PC-9 (cell line): ENCODE measurements at regions of chr12 and their contacts with region 1.

Region 1: GRCh38 chr12:118052324-118053070 is 8.5 kb downstream of the WSB2 start:
- DNase-seq: peak; percentile 88 to 97
- H3K4me3 ChIP-seq: peak overlapping the region; percentile 31; the same call in 1 of the 2 replicates
- H3K27ac ChIP-seq: peak overlapping the region; percentile 84
- H3K4me1 ChIP-seq: peaks cover 40% of the 10 kb centered on the region
- H3K27me3 ChIP-seq: no peaks in the 10 kb centered on the region
- CTCF ChIP-seq: no peak

Region 2: GRCh38 chr12:117968826-117969659 is 83.5 kb before region 1 on chr12 and contains the start of gene KSR2:
- CTCF ChIA-PET with region 1: interaction called, 3 read pairs
- POLR2A ChIA-PET with region 1: no interaction called
- intact Hi-C with region 1: loop called (anchors 2 kb)
- DNase-seq: peak; percentile 74 to 88
- H3K4me3 ChIP-seq: peak within 1 kb of the TSS; percentile 69
- H3K27ac ChIP-seq: peak within 1 kb of the TSS; percentile 67
- H3K4me1 ChIP-seq: peaks cover 9% of the 10 kb centered on the region; the same call in 1 of the 2 replicates
- H3K27me3 ChIP-seq: no peaks in the 10 kb centered on the region
- CTCF ChIP-seq: no peak
- total RNA-seq, gene KSR2: 1.0 and 2.0 TPM in 2 replicates

Region 3: DNA sequence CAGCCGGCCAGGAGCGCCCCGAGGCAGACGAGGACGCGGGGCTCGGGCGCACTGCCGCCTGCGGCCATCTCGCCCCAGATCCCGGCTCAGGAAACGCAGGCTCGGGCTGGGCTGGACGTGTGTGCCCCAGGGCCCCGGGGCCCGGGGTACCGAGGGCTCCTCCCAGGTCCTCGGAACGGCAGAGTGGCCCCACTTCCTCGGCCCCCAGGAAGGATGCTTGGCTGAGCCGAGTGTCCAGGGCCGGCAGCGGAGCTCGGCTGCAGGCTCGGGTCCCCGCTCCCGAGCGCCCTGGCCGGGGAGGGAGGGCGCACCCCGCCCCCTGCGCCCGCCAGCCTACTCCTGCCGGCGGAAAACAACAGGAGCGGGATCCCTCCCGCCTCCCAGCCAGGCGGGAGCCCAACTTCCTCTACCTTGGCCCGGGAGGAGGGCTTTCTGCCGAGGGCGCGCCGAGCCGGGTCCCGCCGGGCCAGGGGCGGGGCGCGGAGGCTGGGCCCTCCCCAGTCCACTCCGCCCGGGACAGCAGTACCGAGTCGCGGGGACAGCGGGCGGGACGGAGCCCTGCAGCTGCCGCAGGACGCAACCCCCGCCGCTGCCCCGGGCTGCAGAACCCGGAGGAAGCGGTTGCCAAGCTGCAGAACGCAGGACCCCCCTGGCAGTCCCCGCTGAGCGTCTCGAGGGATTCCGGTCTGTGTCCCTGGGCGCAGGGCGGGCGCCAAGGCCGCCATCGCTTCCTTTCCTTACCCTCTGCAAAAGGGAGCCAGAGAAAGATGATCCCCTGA is 51.3 kb after region 1 on chr12 and contains the start of gene VSIG10:
- CTCF ChIA-PET with region 1: no interaction called
- POLR2A ChIA-PET with region 1: no interaction called
- intact Hi-C with region 1: loop called (anchors 2 kb)
- DNase-seq: peak; percentile 49 to 82
- H3K4me3 ChIP-seq: peak within 1 kb of the TSS; percentile 81
- H3K27ac ChIP-seq: 0 out of 2 replicates have a peak within 1 kb of the TSS, but pooled peaks have one; percentile 2
- H3K4me1 ChIP-seq: peaks cover 18% of the 10 kb centered on the region
- H3K27me3 ChIP-seq: no peaks in the 10 kb centered on the region
- CTCF ChIP-seq: no peak
- total RNA-seq, gene VSIG10: 45.7 and 49.1 TPM in 2 replicates

Region 4: GRCh38 chr12:118429688-118430383 is 377.3 kb after region 1 on chr12:
- CTCF ChIA-PET with region 1: no interaction called
- POLR2A ChIA-PET with region 1: no interaction called
- intact Hi-C with region 1: no loop called
- DNase-seq: no peak
- H3K4me3 ChIP-seq: no peak overlapping the region
- H3K27ac ChIP-seq: no peak overlapping the region
- H3K4me1 ChIP-seq: no peaks in the 10 kb centered on the region
- H3K27me3 ChIP-seq: 0 out of 2 replicates have a peak, but pooled peaks cover 11% of the 10 kb centered on the region
- CTCF ChIP-seq: no peak